Dendritic cell treated with granulocyte-macrophage colony-stimulating factor and Interleukin-4, amounts not matched to agents 40 ng/mL and 50 ng/mL, for 4 days (primary cell): ENCODE measurements at regions of chr5 and their contacts with region 1.

Region 1: GRCh38 chr5:38994324-38994927 is 79.8 kb downstream of the RICTOR start:
- H3K4me3 Mint-ChIP-seq: no peak overlapping the region
- H3K27ac Mint-ChIP-seq: no peak overlapping the region
- H3K4me1 Mint-ChIP-seq: no peaks in the 10 kb centered on the region
- H3K27me3 Mint-ChIP-seq: no peaks in the 10 kb centered on the region

Region 2: GRCh38 chr5:38961691-38962090 is 32.7 kb before region 1 on chr5:
- intact Hi-C with region 1: no loop called
- H3K4me3 Mint-ChIP-seq: no peak overlapping the region
- H3K27ac Mint-ChIP-seq: no peak overlapping the region
- H3K4me1 Mint-ChIP-seq: no peaks in the 10 kb centered on the region
- H3K27me3 Mint-ChIP-seq: no peaks in the 10 kb centered on the region

Region 3: GRCh38 chr5:38979535-38979934 is 14.9 kb before region 1 on chr5:
- intact Hi-C with region 1: no loop called
- H3K4me3 Mint-ChIP-seq: no peak overlapping the region
- H3K27ac Mint-ChIP-seq: no peak overlapping the region
- H3K4me1 Mint-ChIP-seq: no peaks in the 10 kb centered on the region
- H3K27me3 Mint-ChIP-seq: no peaks in the 10 kb centered on the region

Region 4: GRCh38 chr5:39080597-39081204 is 86.3 kb after region 1 on chr5:
- intact Hi-C with region 1: loop called (anchors 1 kb)
- H3K4me3 Mint-ChIP-seq: no peak overlapping the region
- H3K27ac Mint-ChIP-seq: no peak overlapping the region
- H3K4me1 Mint-ChIP-seq: peaks cover 9% of the 10 kb centered on the region
- H3K27me3 Mint-ChIP-seq: peaks cover 2% of the 10 kb centered on the region